Right ventricle myocardium inferior (tissue), 1 donor: ENCODE measurements at regions of chr19 and their contacts with region 1.

Region 1: DNA sequence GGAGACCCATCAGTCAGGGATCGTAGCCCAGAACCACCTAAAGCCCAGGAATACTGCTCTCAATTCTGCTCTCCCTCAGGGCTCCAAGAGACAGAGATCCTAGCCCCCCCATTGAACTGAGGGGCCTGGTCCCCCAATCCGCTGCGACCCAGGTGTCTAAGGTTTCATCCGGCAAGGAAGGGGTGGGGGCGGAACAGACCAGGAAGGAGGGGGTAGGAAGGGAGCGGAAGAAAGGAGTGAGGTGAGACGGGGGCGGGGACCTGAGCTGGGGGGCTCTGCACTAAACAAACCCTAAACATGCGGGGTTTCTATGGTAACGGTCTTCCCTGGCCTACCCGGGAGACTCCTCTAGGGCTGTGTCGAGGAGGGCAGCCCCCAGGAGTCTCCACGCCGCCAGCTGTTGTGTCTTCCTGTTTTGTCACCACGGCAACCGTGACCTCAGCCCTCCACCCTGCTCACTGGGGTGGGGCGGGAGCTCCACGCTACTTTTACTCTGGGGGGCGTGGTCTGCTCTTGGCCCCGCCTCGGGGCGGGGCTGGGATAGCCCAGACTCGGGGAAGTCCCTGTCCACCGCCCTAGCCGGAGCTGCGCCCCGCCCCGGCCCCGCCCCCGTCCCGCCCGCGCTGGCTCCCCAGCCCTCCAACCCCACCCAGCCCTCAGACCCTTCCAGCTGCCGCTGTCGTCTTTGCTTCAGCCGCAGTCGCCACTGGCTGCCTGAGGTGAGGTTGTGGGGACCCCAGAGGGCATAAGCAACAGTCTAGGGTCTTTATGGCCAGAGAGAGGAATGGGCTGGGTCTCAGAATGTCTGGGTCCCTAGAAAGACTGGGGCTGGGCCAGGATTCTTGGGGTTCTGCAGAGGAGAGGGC is at the start of gene MYADM:
- DNase-seq: peak; percentile 100
- ATAC-seq: peak; percentile 89
- total RNA-seq, gene MYADM: 141 TPM

Region 2: DNA sequence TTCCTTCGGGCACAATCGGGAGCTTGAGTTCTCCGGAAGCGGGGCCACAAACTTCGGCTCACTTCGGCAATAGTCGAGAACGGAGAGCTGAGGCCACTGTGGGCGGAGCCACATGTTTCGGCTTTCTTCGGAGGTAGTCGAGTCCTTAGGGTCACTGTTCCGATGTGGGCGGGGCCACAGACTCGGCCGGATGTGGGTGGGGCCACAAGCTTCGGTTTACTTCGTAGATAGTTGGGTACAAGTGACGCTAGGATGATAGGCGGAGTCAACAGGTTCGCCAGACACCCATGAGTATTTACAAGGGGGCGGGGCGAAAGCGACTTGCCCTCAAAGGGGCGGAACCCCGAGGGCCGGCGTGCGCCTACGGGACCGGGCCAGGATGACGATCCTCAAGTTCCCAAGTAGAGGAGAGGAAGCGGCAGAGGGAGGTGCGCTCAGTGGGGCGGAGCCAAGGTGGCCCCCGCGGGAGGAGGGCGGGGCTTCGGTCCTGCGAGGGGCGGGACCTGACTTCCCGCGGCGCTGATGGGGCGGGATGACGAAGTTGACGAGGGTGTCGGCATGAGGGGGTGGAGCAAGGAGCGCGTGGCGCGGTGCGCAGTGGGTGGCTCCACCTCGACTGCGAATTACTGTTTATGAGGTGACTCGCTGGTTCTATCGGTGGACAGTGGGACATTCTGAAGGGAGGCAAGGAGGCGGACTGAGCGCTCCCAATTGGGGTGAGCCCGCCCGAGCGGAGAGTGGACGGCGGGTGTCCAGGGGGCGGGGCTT is 322.5 kb after region 1 on chr19:
- intact Hi-C with region 1: loop called (anchors 5 kb)
- DNase-seq: peak; percentile 100
- ATAC-seq: peak; percentile 80

Region 3: DNA sequence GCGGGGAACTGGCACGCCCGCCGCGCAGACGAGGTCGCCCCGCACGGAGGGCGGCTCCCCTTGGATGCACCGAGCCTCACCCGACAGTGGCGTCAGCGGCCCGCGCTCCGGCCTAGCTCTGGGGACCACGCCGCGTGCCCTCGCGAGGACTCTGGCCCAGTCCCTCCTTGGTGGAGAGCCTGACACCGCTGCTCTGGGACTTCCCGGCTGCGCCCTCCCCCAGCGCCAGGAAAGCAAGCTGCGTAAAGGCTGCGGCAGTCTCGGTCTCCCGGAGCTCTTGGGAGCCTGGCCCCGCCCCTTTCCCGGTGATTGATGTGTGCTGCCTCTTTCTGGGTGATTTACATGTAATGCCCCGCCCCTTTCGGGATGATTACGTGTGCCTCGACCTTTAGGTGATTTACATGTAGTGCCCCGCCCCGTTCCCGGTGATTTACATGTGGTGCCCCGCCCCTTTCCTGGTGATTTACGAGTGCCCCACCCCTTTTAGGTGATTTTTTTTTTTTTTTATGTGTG is 596.1 kb after region 1 on chr19 and contains the start of gene LENG9:
- intact Hi-C with region 1: loop called (anchors 10 kb)
- DNase-seq: peak; percentile 99
- ATAC-seq: peak; percentile 79
- total RNA-seq, gene LENG9: 1.8 TPM